Calu3 (cell line): ENCODE measurements at regions of chr15 and their contacts with region 1.

Region 1: GRCh38 chr15:44215594-44215993 is 20.5 kb upstream of the FRMD5 start:
- DNase-seq: peak; percentile 32
- H3K4me3 Mint-ChIP-seq: no peak overlapping the region
- H3K27ac Mint-ChIP-seq: no peak overlapping the region
- H3K4me1 Mint-ChIP-seq: peaks cover 6% of the 10 kb centered on the region
- H3K27me3 Mint-ChIP-seq: no peaks in the 10 kb centered on the region
- CTCF ChIP-seq: no peak

Region 2: DNA sequence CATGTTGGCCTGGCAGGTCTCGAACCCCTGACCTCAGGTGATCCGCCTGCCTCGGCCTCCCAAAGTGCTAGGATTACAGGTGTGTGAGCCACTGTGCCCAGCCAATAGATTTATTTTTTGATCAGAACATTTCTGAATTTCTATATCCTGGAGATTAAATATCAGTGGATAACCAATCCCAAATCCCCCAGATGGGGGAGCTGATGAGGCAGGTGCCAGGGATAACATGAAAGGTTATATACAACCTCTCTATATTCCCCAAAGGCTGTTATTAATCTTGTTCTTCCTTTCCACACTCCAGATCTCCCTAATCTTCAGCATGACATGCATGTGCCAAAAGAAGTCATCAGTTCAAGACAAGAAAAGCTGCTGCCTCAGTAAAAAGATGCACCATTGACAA is 276.5 kb before region 1 on chr15:
- CTCF ChIA-PET with region 1: no interaction called
- intact Hi-C with region 1: loop called (anchors 10 kb)
- DNase-seq: peak; percentile 56
- H3K4me3 Mint-ChIP-seq: no peak overlapping the region
- H3K27ac Mint-ChIP-seq: no peak overlapping the region
- H3K4me1 Mint-ChIP-seq: peaks cover 8% of the 10 kb centered on the region
- H3K27me3 Mint-ChIP-seq: no peaks in the 10 kb centered on the region
- CTCF ChIP-seq: no peak

Region 3: GRCh38 chr15:44173813-44174212 is 41.8 kb before region 1 on chr15:
- CTCF ChIA-PET with region 1: no interaction called
- intact Hi-C with region 1: loop called (anchors 2 kb)
- DNase-seq: no peak
- H3K4me3 Mint-ChIP-seq: no peak overlapping the region
- H3K27ac Mint-ChIP-seq: no peak overlapping the region
- H3K4me1 Mint-ChIP-seq: no peaks in the 10 kb centered on the region
- H3K27me3 Mint-ChIP-seq: no peaks in the 10 kb centered on the region
- CTCF ChIP-seq: no peak

Region 4: GRCh38 chr15:44308415-44308814 is 92.8 kb after region 1 on chr15:
- CTCF ChIA-PET with region 1: no interaction called
- intact Hi-C with region 1: no loop called
- DNase-seq: no peak
- H3K4me3 Mint-ChIP-seq: no peak overlapping the region
- H3K27ac Mint-ChIP-seq: no peak overlapping the region
- H3K4me1 Mint-ChIP-seq: no peaks in the 10 kb centered on the region
- H3K27me3 Mint-ChIP-seq: no peaks in the 10 kb centered on the region
- CTCF ChIP-seq: no peak

Region 5: DNA sequence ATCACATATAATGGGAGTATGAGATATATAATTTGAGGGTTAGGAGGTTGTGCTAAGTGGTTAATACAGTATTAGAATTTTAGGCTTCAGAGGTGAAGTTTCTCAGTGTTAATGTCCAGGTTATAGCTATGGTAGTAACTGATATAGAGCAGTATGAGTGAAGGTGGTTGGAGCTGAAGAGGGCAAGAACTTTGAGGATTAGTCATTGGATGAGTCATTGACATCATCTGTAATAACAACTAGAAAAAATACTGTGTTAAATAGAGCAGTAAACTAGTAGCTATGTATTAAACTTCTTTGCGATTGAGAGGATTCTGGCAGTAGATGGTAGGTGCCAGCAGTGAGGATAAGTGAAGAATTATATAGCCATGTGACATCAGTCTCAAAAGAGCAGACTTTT is 273.9 kb after region 1 on chr15:
- CTCF ChIA-PET with region 1: no interaction called
- intact Hi-C with region 1: no loop called
- DNase-seq: no peak
- H3K4me3 Mint-ChIP-seq: no peak overlapping the region
- H3K27ac Mint-ChIP-seq: no peak overlapping the region
- H3K4me1 Mint-ChIP-seq: peaks cover 30% of the 10 kb centered on the region
- H3K27me3 Mint-ChIP-seq: no peaks in the 10 kb centered on the region
- CTCF ChIP-seq: no peak